Activated CD8-positive, alpha-beta memory T cell treated with anti-CD3 and anti-CD28 coated beads, Interleukin-2, amount 10 ng/mL, durations not matched to agents 7 days and 5 days (primary cell): ENCODE measurements at regions of chr13 and their contacts with region 1.

Region 1: DNA sequence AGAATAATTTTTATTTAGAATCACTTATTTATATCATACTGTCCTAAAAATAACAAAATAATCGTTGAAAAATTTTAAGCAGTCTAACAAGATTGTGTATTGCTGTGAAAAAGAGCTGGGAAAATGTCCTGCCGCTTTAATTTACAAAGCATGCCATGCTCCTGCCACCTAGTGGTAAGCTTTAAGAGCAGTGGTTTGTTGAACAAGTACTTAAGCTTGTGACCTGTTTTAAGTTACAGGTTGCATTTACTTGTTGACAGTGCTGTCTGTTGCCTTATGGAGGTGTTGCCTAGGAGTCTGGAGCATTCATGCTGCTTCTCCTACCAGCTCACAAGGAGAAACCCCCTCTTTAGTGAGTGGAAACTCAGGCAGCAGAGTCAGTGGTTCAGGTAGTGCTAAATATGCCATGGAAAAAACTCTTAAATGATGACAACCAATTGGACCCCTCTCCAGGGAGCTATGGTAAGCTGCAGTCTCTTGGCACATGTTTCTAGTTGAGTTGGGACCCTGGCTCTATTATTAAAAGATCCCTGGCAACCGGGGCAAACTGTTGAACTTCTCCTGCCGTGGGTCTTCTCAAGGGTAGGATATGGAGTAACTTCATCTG is 68.4 kb downstream of the SPATA13 start:
- DNase-seq: peak; percentile 61
- ATAC-seq: peak; percentile 17
- H3K4me3 Mint-ChIP-seq: no peak overlapping the region
- H3K27ac Mint-ChIP-seq: no peak overlapping the region
- H3K4me1 Mint-ChIP-seq: peaks cover 64% of the 10 kb centered on the region
- H3K27me3 Mint-ChIP-seq: no peaks in the 10 kb centered on the region

Region 2: GRCh38 chr13:24071423-24072075 is 157.4 kb before region 1 on chr13:
- CTCF ChIA-PET with region 1: no interaction called
- DNase-seq: no peak
- ATAC-seq: no peak
- H3K4me3 Mint-ChIP-seq: no peak overlapping the region
- H3K27ac Mint-ChIP-seq: no peak overlapping the region
- H3K4me1 Mint-ChIP-seq: peaks cover 3% of the 10 kb centered on the region
- H3K27me3 Mint-ChIP-seq: peaks cover 9% of the 10 kb centered on the region

Region 3: DNA sequence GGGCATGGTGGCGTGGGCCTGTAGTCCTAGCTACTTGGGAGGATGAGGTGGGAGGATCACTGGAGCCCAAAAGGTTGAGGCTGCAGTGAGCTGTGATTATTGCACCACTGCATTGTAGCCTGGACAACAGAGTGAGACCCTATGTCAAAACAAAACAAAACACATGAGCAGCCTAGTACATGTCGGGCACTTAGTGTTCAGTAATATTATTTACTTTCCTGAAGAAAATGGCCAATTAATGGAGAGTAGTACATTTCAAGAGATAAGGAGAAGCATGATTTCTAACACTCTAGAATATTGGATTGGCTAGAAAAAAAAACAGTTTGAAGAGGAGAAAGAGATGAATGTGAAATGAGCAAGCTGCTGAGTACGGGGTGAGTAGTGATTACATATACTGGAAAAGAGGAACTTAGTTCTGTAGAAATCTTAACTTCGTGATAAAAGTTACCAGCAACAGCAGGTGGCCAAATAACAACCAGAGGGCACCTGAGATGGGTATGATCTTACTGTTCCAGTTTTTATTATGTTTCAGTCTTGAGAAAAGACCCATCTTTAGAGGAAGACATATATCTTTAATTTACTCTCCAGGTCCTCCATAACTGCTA is 32.3 kb before region 1 on chr13:
- CTCF ChIA-PET with region 1: no interaction called
- DNase-seq: no peak
- ATAC-seq: no peak
- H3K4me3 Mint-ChIP-seq: no peak overlapping the region
- H3K27ac Mint-ChIP-seq: no peak overlapping the region
- H3K4me1 Mint-ChIP-seq: peaks cover 2% of the 10 kb centered on the region
- H3K27me3 Mint-ChIP-seq: no peaks in the 10 kb centered on the region

Region 4: GRCh38 chr13:24254146-24254841 is 25.3 kb after region 1 on chr13:
- CTCF ChIA-PET with region 1: interaction called, 14 read pairs
- DNase-seq: peak; percentile 91
- ATAC-seq: peak; percentile 75
- H3K4me3 Mint-ChIP-seq: peak overlapping the region; percentile 84
- H3K27ac Mint-ChIP-seq: peak overlapping the region; percentile 95
- H3K4me1 Mint-ChIP-seq: peaks cover 82% of the 10 kb centered on the region
- H3K27me3 Mint-ChIP-seq: no peaks in the 10 kb centered on the region